Caco-2 (cell line): ENCODE measurements at regions of chr3 and their contacts with region 1.

Region 1: DNA sequence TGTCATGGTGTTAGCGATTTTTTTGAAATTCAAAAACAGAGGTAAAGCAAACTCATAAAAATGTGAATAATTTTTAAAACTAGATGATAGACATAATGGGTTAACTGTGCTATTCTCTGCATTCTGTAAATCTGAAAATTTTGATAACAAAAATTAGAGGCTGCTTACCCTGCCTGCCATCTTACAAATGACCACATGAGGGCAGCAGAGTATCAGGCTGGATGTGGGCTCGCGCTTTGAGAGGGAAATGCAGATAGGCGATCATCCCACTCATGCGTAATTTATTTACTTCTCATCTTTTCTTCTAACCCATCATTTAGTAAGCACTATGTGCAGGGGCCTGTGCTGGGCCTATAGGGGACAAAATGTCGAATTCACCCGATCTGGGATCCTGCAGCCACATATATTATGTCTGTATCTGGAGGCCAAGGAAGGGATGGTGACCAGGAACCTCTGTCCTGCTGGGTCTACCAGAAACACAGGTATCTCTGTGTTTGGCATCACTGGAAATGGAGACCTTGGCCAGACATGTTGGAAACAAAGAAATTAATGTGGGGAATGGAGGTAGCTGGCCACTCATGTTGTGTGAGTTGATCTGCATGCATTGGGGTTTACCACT is 7.8 kb upstream of the RAD18 start:
- DNase-seq: peak in 1 of 2 experiments; percentile 72
- H3K4me3 ChIP-seq: no peak overlapping the region
- H3K4me3 Mint-ChIP-seq: no peak overlapping the region
- H3K27ac Mint-ChIP-seq: no peak overlapping the region
- H3K4me1 ChIP-seq: no peaks in the 10 kb centered on the region
- H3K4me1 Mint-ChIP-seq: no peaks in the 10 kb centered on the region
- H3K27me3 ChIP-seq: no peaks in the 10 kb centered on the region
- H3K27me3 Mint-ChIP-seq: no peaks in the 10 kb centered on the region
- CTCF ChIP-seq: peak; percentile 92 to 94

Region 2: DNA sequence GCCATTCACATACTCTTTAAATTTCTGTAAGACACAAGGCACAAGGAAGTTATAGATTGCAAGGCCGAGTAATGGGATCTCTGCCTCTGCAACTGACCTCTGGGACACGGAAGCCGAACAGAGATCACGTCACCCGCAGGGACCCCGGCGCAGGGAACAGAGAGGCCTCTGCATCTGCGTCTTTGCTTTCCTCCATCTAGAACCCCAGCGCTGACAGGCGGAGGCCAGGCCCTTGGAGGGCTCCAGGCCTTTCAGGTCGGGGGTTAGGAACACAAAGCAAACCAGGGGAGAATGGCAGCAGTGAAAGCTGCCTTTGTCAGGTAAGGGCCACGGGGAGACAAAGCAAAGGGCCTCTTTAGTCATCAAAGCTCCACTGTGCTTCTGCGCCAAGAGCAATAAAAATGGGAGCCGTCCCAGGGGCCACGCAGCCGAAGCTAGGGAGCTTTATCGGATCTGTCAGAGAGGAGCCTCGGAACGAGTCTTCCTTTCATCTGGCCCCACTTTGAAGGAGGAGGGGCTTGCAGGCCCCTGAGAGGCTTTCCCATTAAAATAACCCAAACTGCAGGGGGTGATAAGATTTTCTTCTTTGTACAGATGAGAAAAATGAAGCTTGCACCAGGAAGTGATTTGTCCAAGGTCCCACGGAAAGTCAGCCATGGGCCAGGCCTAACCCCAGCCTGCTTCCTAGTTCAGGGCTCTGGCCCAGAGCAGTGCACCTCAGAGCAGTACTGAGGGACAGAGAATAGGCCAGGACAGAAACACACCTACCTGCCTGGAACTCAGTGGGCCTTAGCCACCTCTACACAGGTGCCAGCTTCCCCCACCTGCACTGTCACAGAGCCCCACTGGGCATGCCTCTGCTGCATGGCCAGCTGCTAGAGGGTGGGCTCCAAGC is 76.6 kb after region 1 on chr3:
- CTCF ChIA-PET with region 1: no interaction called
- POLR2A ChIA-PET with region 1: no interaction called
- intact Hi-C with region 1: no loop called
- DNase-seq: no peak
- H3K4me3 ChIP-seq: no peak overlapping the region
- H3K4me3 Mint-ChIP-seq: no peak overlapping the region
- H3K27ac Mint-ChIP-seq: no peak overlapping the region
- H3K4me1 ChIP-seq: no peaks in the 10 kb centered on the region
- H3K4me1 Mint-ChIP-seq: no peaks in the 10 kb centered on the region
- H3K27me3 ChIP-seq: no peaks in the 10 kb centered on the region
- H3K27me3 Mint-ChIP-seq: peaks cover 3% of the 10 kb centered on the region
- CTCF ChIP-seq: no peak

Region 3: GRCh38 chr3:9249273-9250192 is 278.5 kb after region 1 on chr3 and contains the start of gene SRGAP3:
- CTCF ChIA-PET with region 1: interaction called, 4 read pairs
- POLR2A ChIA-PET with region 1: no interaction called
- intact Hi-C with region 1: loop called (anchors 5 kb)
- DNase-seq: peak; percentile 87 to 88
- H3K4me3 ChIP-seq: peak within 1 kb of the TSS; percentile 45
- H3K4me3 Mint-ChIP-seq: peak within 1 kb of the TSS; percentile 81
- H3K27ac Mint-ChIP-seq: peak within 1 kb of the TSS; percentile 21
- H3K4me1 ChIP-seq: no peaks in the 10 kb centered on the region; the same call in 1 of the 2 replicates
- H3K4me1 Mint-ChIP-seq: no peaks in the 10 kb centered on the region
- H3K27me3 ChIP-seq: no peaks in the 10 kb centered on the region
- H3K27me3 Mint-ChIP-seq: peaks cover 4% of the 10 kb centered on the region
- CTCF ChIP-seq: peak in 1 of 2 experiments; percentile 41
- total RNA-seq, gene SRGAP3: 1.3 and 1.6 TPM in 2 replicates